Cardiac septum (tissue), 1 donor: ENCODE measurements at regions of chr6 and their contacts with region 1.

Region 1: GRCh38 chr6:87472525-87473418 is at the start of gene SLC35A1:
- DNase-seq: peak; percentile 94
- total RNA-seq, gene SLC35A1: 10.9 TPM

Region 2: GRCh38 chr6:87407901-87408720 is 64.7 kb before region 1 on chr6 and contains the start of gene CFAP206:
- intact Hi-C with region 1: loop called (anchors 2 kb)
- DNase-seq: peak; percentile 89
- total RNA-seq, gene CFAP206: not detected

Region 3: DNA sequence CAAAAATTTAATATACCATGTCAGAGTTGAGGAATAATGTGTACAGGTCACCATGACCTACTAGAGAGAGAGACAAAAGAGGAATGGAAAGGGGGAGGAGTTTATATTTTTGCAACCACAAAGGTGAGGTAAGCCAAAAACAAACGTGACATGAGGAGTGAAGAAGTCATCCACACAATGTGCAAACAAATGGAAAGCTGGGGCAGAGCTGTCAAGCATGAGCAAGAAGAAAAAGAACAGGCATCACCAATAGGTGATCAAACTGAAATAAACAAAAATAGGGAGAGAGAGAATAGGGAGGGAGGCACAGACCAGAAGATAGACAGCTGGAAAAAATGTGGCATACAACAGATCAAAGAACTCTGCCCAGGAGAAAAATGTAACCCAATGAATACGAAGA is 101.5 kb after region 1 on chr6:
- intact Hi-C with region 1: no loop called
- DNase-seq: no peak

Region 4: GRCh38 chr6:87589693-87590549 is 117.1 kb after region 1 on chr6 and contains the starts of genes ORC3 and RARS2:
- intact Hi-C with region 1: loop called (anchors 2 kb)
- DNase-seq: peak; percentile 99
- total RNA-seq, gene ORC3: 23.0 TPM
- total RNA-seq, gene RARS2: 23.6 TPM